CD4-positive, alpha-beta T cell (primary cell): ENCODE measurements at regions of chr7 and their contacts with region 1.

Region 1: GRCh38 chr7:133434055-133434865 is 181.4 kb downstream of the EXOC4 start:
- DNase-seq: peak in 3 of 14 experiments; percentile 20 to 43 (median 37)
- ATAC-seq: no peak
- H3K4me3 ChIP-seq: no peak overlapping the region
- H3K4me3 Mint-ChIP-seq: no peak overlapping the region
- H3K27ac ChIP-seq: no peak overlapping the region
- H3K27ac Mint-ChIP-seq: peak overlapping the region; percentile 13
- H3K4me1 ChIP-seq: no peaks in the 10 kb centered on the region
- H3K4me1 Mint-ChIP-seq: peaks cover 16% of the 10 kb centered on the region
- H3K27me3 ChIP-seq: no peaks in the 10 kb centered on the region
- H3K27me3 Mint-ChIP-seq: no peaks in the 10 kb centered on the region
- CTCF ChIP-seq: peak; percentile 42

Region 2: GRCh38 chr7:131688738-131689661 is 1745.3 kb before region 1 on chr7:
- CTCF ChIA-PET with region 1: no interaction called
- POLR2A ChIA-PET with region 1: no interaction called
- intact Hi-C with region 1: loop called in 1 of 2 experiments (anchors 5 kb)
- DNase-seq: peak; percentile 22 to 67 (median 40)
- ATAC-seq: peak; percentile 64
- H3K4me3 ChIP-seq: no peak overlapping the region
- H3K4me3 Mint-ChIP-seq: no peak overlapping the region
- H3K27ac ChIP-seq: no peak overlapping the region
- H3K27ac Mint-ChIP-seq: no peak overlapping the region
- H3K4me1 ChIP-seq: peaks cover 6% of the 10 kb centered on the region
- H3K4me1 Mint-ChIP-seq: no peaks in the 10 kb centered on the region
- H3K27me3 ChIP-seq: peaks cover 6 to 15% of the 10 kb centered on the region in 2 experiments
- H3K27me3 Mint-ChIP-seq: peaks cover 65% of the 10 kb centered on the region
- CTCF ChIP-seq: peak; percentile 73

Region 3: GRCh38 chr7:131859147-131859821 is 1575.0 kb before region 1 on chr7:
- CTCF ChIA-PET with region 1: no interaction called
- POLR2A ChIA-PET with region 1: no interaction called
- intact Hi-C with region 1: loop called in 1 of 2 experiments (anchors 5 kb)
- DNase-seq: peak in 9 of 14 experiments; percentile 6 to 40 (median 12)
- ATAC-seq: no peak
- H3K4me3 ChIP-seq: no peak overlapping the region
- H3K4me3 Mint-ChIP-seq: no peak overlapping the region
- H3K27ac ChIP-seq: no peak overlapping the region
- H3K27ac Mint-ChIP-seq: no peak overlapping the region
- H3K4me1 ChIP-seq: no peaks in the 10 kb centered on the region
- H3K4me1 Mint-ChIP-seq: no peaks in the 10 kb centered on the region
- H3K27me3 ChIP-seq: no peaks in the 10 kb centered on the region
- H3K27me3 Mint-ChIP-seq: peaks cover 6% of the 10 kb centered on the region
- CTCF ChIP-seq: peak; percentile 68

Region 4: GRCh38 chr7:132394283-132395198 is 1039.7 kb before region 1 on chr7:
- CTCF ChIA-PET with region 1: no interaction called
- POLR2A ChIA-PET with region 1: no interaction called
- intact Hi-C with region 1: loop called in 1 of 2 experiments (anchors 10 kb)
- DNase-seq: peak in 5 of 14 experiments; percentile 11 to 66 (median 58)
- ATAC-seq: no peak
- H3K4me3 ChIP-seq: no peak overlapping the region
- H3K4me3 Mint-ChIP-seq: no peak overlapping the region
- H3K27ac ChIP-seq: no peak overlapping the region
- H3K27ac Mint-ChIP-seq: no peak overlapping the region
- H3K4me1 ChIP-seq: peaks cover 7% of the 10 kb centered on the region
- H3K4me1 Mint-ChIP-seq: peaks cover 4% of the 10 kb centered on the region
- H3K27me3 ChIP-seq: no peaks in the 10 kb centered on the region
- H3K27me3 Mint-ChIP-seq: peaks cover under 1% of the 10 kb centered on the region
- CTCF ChIP-seq: peak; percentile 63

Region 5: GRCh38 chr7:132709971-132710567 is 724.2 kb before region 1 on chr7:
- CTCF ChIA-PET with region 1: no interaction called
- POLR2A ChIA-PET with region 1: no interaction called
- intact Hi-C with region 1: loop called in 1 of 2 experiments (anchors 10 kb)
- DNase-seq: peak in 6 of 14 experiments; percentile 2 to 36 (median 28)
- ATAC-seq: no peak
- H3K4me3 ChIP-seq: no peak overlapping the region
- H3K4me3 Mint-ChIP-seq: no peak overlapping the region
- H3K27ac ChIP-seq: no peak overlapping the region
- H3K27ac Mint-ChIP-seq: no peak overlapping the region
- H3K4me1 ChIP-seq: no peaks in the 10 kb centered on the region
- H3K4me1 Mint-ChIP-seq: no peaks in the 10 kb centered on the region
- H3K27me3 ChIP-seq: peaks cover 0 to 3% of the 10 kb centered on the region in 2 experiments
- H3K27me3 Mint-ChIP-seq: no peaks in the 10 kb centered on the region
- CTCF ChIP-seq: no peak